Mammary epithelial cell (primary cell): ENCODE measurements at regions of chr19 and their contacts with region 1.

Region 1: DNA sequence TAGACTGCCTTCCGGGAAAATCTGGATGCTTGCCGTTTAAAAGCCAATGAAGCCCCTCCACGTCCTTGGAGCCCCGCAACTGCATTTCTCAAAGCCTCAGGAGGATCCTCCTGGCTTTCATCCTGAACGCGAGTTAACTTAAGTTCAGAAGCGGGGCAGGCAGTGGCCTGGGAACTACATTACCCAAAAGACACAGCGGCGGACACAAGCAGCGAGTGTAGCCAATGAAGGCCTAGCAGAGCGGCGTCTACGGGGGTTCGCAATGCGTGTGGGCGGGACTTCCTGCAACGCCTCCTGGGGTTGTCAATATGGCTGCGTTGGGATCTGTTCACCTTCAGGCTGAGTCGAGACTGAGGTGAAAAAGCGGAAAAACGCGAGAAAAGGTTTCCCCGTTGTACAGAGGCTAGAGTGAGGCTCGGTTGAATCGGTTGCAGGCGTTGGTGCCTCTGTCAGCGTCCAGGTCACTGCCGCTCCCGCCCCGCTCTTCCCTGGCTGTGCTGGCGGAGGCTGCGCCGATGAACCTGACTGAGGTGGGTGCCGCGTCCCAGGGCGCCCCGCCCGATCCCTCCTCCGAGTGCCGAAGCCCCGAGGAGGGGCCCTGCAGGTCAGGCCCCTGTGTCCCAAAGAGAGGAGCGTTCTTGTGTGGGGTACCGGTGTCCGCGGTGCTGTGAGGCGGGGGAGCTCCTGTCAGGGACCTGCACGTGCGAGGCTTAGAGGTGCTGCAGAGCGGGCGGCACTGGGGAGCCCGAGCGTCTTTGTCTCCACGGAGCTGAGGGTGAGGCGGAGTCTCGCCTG is at the start of gene ZNF17:
- DNase-seq: peak; percentile 91
- H3K4me3 ChIP-seq: peak within 1 kb of the TSS; percentile 75 to 88 (median 87)
- H3K27ac ChIP-seq: peak within 1 kb of the TSS; percentile 30
- H3K4me1 ChIP-seq: no peaks in the 10 kb centered on the region
- H3K27me3 ChIP-seq: no peaks in the 10 kb centered on the region
- CTCF ChIP-seq: no peak
- total RNA-seq, gene ZNF17: 6.0 to 13.8 TPM

Region 2: GRCh38 chr19:57103573-57104277 is 307.3 kb before region 1 on chr19:
- CTCF ChIA-PET with region 1: no interaction called
- dilution Hi-C with region 1: no loop called
- in situ Hi-C with region 1: no loop called
- intact Hi-C with region 1: loop called (anchors 5 kb)
- DNase-seq: peak; percentile 46
- H3K4me3 ChIP-seq: peak overlapping the region; percentile 11 to 25 (median 17)
- H3K27ac ChIP-seq: no peak overlapping the region
- H3K4me1 ChIP-seq: peaks cover 6% of the 10 kb centered on the region
- H3K27me3 ChIP-seq: no peaks in the 10 kb centered on the region
- CTCF ChIP-seq: peak; percentile 90 to 91

Region 3: DNA sequence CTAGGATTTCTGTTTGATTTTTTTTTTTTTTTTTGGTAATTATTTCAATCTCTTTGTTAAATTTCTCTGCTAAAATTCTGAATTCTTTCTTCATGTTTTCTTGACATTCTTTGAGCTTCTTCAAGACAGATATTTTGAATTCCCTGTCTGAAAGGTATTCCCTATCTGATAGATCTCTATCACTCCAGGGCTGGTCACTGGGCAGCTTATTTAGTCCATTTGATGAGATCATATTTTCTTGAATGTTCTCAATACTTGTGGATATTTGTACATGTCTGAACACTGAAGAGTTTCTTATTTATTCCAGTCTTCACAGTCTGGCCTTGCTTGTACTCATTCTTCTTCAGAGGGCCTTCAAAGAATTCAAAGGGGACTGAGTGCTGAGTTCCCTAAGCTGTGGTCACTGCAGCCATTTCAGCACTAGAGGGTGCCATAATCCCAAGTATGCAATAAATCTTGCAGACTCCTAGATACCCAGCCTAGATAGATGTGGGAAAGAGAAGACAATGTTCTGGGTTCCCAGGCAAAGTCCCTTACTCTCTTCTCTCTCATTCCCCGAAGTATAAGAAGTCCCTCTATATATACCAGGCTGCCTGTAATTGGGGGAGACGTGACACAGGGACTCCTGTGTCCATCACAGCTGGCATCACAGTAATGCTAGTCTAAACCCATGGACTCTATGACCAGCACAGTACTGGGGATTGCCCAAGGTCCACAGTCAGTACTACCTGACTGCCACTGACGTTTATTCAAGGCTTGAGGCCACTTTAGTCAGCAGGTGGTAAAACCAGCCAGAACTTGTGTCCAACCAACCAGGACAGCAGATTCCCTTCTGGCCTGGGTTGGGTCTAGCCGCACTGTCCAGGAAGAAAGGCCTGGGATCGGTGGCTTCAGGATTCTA is 54.7 kb after region 1 on chr19:
- CTCF ChIA-PET with region 1: interaction called, 11 read pairs
- dilution Hi-C with region 1: no loop called
- in situ Hi-C with region 1: no loop called
- intact Hi-C with region 1: no loop called
- DNase-seq: peak; percentile 45
- H3K4me3 ChIP-seq: no peak overlapping the region
- H3K27ac ChIP-seq: no peak overlapping the region
- H3K4me1 ChIP-seq: no peaks in the 10 kb centered on the region
- H3K27me3 ChIP-seq: no peaks in the 10 kb centered on the region
- CTCF ChIP-seq: peak; percentile 49 to 71

Region 4: GRCh38 chr19:57613941-57614743 is 203.1 kb after region 1 on chr19 and contains the start of gene ZNF134:
- CTCF ChIA-PET with region 1: no interaction called
- dilution Hi-C with region 1: no loop called
- in situ Hi-C with region 1: no loop called
- intact Hi-C with region 1: loop called (anchors 2 kb)
- DNase-seq: peak; percentile 82
- H3K4me3 ChIP-seq: peak within 1 kb of the TSS; percentile 88 to 99 (median 91)
- H3K27ac ChIP-seq: peak within 1 kb of the TSS; percentile 25
- H3K4me1 ChIP-seq: peaks cover 3% of the 10 kb centered on the region
- H3K27me3 ChIP-seq: no peaks in the 10 kb centered on the region
- CTCF ChIP-seq: peak; percentile 8 to 71
- total RNA-seq, gene ZNF134: 21.7 to 32.0 TPM

Region 5: GRCh38 chr19:57746580-57747471 is 335.8 kb after region 1 on chr19 and contains the start of gene ZNF776:
- CTCF ChIA-PET with region 1: no interaction called
- dilution Hi-C with region 1: no loop called
- in situ Hi-C with region 1: no loop called
- intact Hi-C with region 1: loop called (anchors 5 kb)
- DNase-seq: peak; percentile 90
- H3K4me3 ChIP-seq: peak within 1 kb of the TSS; percentile 78 to 96 (median 89)
- H3K27ac ChIP-seq: peak within 1 kb of the TSS; percentile 58
- H3K4me1 ChIP-seq: peaks cover 7% of the 10 kb centered on the region
- H3K27me3 ChIP-seq: no peaks in the 10 kb centered on the region
- CTCF ChIP-seq: no peak
- total RNA-seq, gene ZNF776: 7.7 to 13.0 TPM

Region 6: GRCh38 chr19:58519355-58520256 is 1108.5 kb after region 1 on chr19 and contains the start of gene ZBTB45:
- CTCF ChIA-PET with region 1: no interaction called
- dilution Hi-C with region 1: no loop called
- in situ Hi-C with region 1: no loop called
- intact Hi-C with region 1: loop called (anchors 2 kb)
- DNase-seq: peak; percentile 96
- H3K4me3 ChIP-seq: peak within 1 kb of the TSS; percentile 80 to 87 (median 86)
- H3K27ac ChIP-seq: peak within 1 kb of the TSS; percentile 78
- H3K4me1 ChIP-seq: peaks cover 11% of the 10 kb centered on the region
- H3K27me3 ChIP-seq: no peaks in the 10 kb centered on the region
- CTCF ChIP-seq: peak; percentile 49 to 90
- total RNA-seq, gene ZBTB45: 8.2 to 14.1 TPM